ENCODE measurements at regions of chr1 and their contacts with region 1.

Region 1: GRCh38 chr1:23598424-23598823 is 39.1 kb upstream of the ID3 start:
- DNase-seq: peak; percentile 92
- ATAC-seq: peak; percentile 90
- H3K4me3 Mint-ChIP-seq: no peak overlapping the region
- H3K27ac Mint-ChIP-seq: peak overlapping the region; percentile 92; the same call in 1 of the 2 replicates
- H3K4me1 Mint-ChIP-seq: peaks cover 85% of the 10 kb centered on the region
- H3K27me3 Mint-ChIP-seq: no peaks in the 10 kb centered on the region; the same call in 1 of the 2 replicates
- CTCF ChIP-seq: no peak

Region 2: DNA sequence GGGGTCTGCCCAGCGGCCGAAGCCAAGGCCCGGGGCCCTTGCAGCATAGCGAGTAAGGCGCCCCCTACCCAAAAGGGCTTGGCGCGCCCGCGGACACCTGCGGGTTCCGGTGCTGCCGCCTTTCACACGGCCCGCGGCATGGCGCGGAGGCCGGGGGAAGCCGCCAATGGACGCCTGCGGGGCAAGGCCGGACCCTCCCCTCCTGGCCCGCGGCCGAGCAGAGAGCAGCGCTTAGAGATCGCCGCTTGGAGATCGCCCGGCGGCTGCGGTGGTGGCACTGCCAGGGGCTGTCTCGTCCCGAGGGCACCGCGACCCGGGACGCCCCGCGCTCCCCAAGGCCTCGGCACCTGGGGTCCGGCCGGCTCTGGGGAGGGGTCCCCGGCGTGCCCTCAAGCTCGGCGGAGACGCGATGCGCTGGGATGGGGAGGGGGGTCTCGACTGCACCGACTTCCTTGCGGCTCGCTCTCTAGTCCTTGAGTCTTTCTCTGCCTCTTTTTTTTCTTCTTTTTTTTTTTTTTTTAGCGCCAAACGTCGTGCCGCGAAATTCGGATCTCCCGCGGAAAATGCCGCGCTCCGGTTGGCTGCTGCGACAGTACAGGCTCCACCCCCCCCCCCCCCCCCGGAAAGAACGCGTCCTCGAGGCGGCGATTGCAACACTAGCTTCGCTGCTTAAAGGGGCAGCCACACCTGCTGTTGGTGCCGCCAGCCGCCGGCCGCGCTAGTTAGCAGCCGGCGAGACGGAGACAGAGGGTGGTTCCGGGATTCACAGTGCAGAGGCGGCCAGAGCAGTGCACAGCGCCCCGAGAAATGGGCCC is 67.5 kb before region 1 on chr1 and contains the start of gene E2F2:
- CTCF ChIA-PET with region 1: no interaction called
- POLR2A ChIA-PET with region 1: interaction called, 10 read pairs
- DNase-seq: peak; percentile 78
- ATAC-seq: peak; percentile 81
- H3K4me3 Mint-ChIP-seq: peak within 1 kb of the TSS; percentile 80
- H3K27ac Mint-ChIP-seq: no peak within 1 kb of the TSS
- H3K4me1 Mint-ChIP-seq: peaks cover 23% of the 10 kb centered on the region
- H3K27me3 Mint-ChIP-seq: peaks cover 52% of the 10 kb centered on the region
- CTCF ChIP-seq: no peak
- total RNA-seq, gene E2F2: 4.9 to 5.6 TPM (median 5.4 TPM) in 3 replicates

Region 3: GRCh38 chr1:23559136-23559984 is 39.1 kb before region 1 on chr1 and contains the start of gene ID3:
- CTCF ChIA-PET with region 1: interaction called, 44 read pairs
- POLR2A ChIA-PET with region 1: interaction called, 100 read pairs
- DNase-seq: peak; percentile 96
- ATAC-seq: peak; percentile 47
- H3K4me3 Mint-ChIP-seq: peak within 1 kb of the TSS; percentile 94
- H3K27ac Mint-ChIP-seq: peak within 1 kb of the TSS; percentile 98
- H3K4me1 Mint-ChIP-seq: peaks cover 74% of the 10 kb centered on the region
- H3K27me3 Mint-ChIP-seq: no peaks in the 10 kb centered on the region
- CTCF ChIP-seq: no peak
- total RNA-seq, gene ID3: 168 to 278 TPM (median 273 TPM) in 3 replicates

Region 4: GRCh38 chr1:23567996-23568607 is 30.3 kb before region 1 on chr1:
- CTCF ChIA-PET with region 1: interaction called, 12 read pairs
- POLR2A ChIA-PET with region 1: interaction called, 8 read pairs
- DNase-seq: peak; percentile 58
- ATAC-seq: peak; percentile 11; the same call in 1 of the 2 replicates
- H3K4me3 Mint-ChIP-seq: peak overlapping the region; percentile 78
- H3K27ac Mint-ChIP-seq: peak overlapping the region; percentile 93
- H3K4me1 Mint-ChIP-seq: peaks cover 62% of the 10 kb centered on the region
- H3K27me3 Mint-ChIP-seq: peaks cover 2% of the 10 kb centered on the region; the same call in 1 of the 2 replicates
- CTCF ChIP-seq: no peak

Region 5: DNA sequence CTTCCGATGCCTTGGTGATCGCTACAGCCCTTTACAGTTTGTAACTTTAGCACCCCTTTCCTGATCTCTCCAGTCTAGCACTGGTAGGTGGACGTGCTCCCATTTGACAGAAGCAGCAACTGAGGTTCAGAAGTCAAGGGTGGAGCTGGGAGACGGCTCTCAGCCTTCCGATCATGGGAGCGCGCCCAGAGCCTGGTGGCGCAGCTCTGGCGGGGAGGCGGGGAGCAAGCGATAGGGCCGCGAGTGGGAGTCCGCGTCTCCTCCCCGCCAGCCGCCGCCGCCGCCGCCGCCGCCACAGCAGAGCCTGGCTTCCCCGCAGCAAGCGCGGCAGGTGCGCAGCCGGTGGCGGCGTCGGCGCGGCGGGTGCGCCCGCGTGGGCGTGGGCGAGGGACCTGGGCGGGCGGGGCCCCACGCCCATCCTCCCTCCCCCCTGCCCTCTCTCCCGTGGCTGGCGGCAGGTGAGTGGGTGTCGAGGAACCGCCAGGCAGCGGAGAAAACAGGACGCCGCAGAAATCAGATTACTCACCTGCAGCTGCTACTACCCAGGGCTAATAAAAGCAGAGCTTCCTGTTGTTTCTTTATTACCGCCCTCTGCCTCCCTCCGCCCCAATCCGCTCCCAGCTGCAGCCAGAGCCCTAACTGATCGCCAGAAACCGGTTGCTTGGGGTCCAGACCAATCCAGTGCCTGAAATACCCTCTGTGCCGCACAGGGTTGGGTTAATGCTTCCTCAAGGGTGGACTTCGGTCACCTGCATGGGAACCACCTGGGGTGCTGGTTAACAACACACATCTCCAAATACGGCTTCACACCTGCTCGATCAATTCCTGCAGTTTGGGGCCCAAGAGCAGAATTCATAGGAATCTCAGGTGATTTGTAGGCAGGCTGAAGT is 21.1 kb after region 1 on chr1:
- CTCF ChIA-PET with region 1: interaction called, 18 read pairs
- POLR2A ChIA-PET with region 1: interaction called, 13 read pairs
- DNase-seq: peak; percentile 71
- ATAC-seq: peak; percentile 91
- H3K4me3 Mint-ChIP-seq: peak overlapping the region; percentile 69
- H3K27ac Mint-ChIP-seq: peak overlapping the region; percentile 72; the same call in 1 of the 2 replicates
- H3K4me1 Mint-ChIP-seq: peaks cover 32% of the 10 kb centered on the region
- H3K27me3 Mint-ChIP-seq: peaks cover 32% of the 10 kb centered on the region
- CTCF ChIP-seq: no peak

Region 6: DNA sequence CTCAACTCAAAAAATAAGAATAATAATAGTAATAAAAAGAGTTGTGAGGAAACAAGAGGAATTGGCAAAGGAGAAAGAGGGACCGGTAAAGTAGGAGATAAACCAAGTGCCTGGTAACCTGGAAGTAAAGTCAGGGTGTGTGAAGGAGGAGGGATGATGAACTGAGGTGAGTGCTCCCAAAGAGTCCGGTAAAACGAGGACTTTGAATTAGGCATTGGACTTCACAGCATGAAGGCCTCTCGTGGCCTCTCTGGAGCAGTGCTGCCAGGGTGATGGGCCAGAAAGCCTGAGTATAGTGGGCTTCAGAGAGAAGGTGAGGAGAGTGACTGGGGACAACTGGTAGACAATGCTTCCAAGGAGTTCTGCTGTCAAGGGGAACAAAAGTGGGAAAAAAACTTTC is 110.8 kb after region 1 on chr1:
- CTCF ChIA-PET with region 1: no interaction called
- POLR2A ChIA-PET with region 1: no interaction called
- DNase-seq: no peak
- ATAC-seq: no peak
- H3K4me3 Mint-ChIP-seq: no peak overlapping the region
- H3K27ac Mint-ChIP-seq: peak overlapping the region; percentile 24; the same call in 1 of the 2 replicates
- H3K4me1 Mint-ChIP-seq: no peaks in the 10 kb centered on the region
- H3K27me3 Mint-ChIP-seq: no peaks in the 10 kb centered on the region
- CTCF ChIP-seq: no peak

Region 7: GRCh38 chr1:23727362-23727827 is 129.0 kb after region 1 on chr1:
- CTCF ChIA-PET with region 1: no interaction called
- POLR2A ChIA-PET with region 1: no interaction called
- DNase-seq: no peak
- ATAC-seq: no peak
- H3K4me3 Mint-ChIP-seq: no peak overlapping the region
- H3K27ac Mint-ChIP-seq: peak overlapping the region; percentile 35; the same call in 1 of the 2 replicates
- H3K4me1 Mint-ChIP-seq: no peaks in the 10 kb centered on the region
- H3K27me3 Mint-ChIP-seq: no peaks in the 10 kb centered on the region
- CTCF ChIP-seq: no peak